Activated CD4-positive, alpha-beta memory T cell treated with anti-CD3 and anti-CD28 coated beads for 36 hours (primary cell): ENCODE measurements at regions of chr1 and their contacts with region 1.

Region 1: GRCh38 chr1:241847796-241848685 is at the start of gene EXO1:
- DNase-seq: peak; percentile 93
- H3K4me3 Mint-ChIP-seq: peak within 1 kb of the TSS; percentile 91
- H3K27ac Mint-ChIP-seq: peak within 1 kb of the TSS; percentile 99
- H3K4me1 Mint-ChIP-seq: peaks cover 22% of the 10 kb centered on the region
- H3K27me3 Mint-ChIP-seq: no peaks in the 10 kb centered on the region
- total RNA-seq, gene EXO1: 44.3 to 50.0 TPM

Region 2: DNA sequence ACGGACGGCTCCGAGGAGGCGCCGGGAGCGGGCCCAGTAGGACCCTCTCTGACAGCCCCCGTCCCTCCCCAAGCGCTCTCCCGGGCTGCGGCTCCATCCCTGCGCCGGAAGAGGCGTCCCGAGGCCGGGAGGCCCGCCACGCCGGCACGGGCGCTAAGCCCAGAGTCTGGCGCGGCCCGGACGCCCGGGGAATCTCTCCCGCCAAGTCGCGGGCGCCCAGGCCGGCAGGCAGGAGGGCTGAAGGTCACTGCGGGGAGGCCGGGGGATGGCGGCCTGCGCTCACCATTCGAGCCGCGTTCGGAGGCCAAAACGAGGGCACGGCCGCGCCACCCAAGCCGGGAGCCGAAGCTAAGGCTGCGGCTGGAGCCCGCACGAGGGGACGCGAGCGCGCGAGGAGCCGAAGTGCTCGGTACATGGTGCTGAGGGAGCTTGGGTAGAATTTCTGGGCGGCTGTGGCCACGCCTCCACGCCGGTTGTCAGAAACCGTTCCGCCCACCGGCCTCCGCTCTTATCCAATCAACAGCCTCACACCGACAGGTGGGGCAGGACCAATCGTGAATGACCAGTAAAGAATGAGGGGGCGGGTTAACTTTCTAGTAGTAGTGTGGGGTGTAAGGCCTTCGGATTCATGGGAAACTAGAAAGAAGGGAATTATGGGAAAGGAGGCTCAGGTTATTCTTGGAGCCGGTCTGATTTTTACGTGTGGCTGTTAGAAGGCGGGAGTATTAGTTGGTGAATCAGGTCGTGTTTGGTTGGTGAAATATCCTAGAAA is 328.5 kb before region 1 on chr1 and contains the start of gene FH:
- CTCF ChIA-PET with region 1: no interaction called
- POLR2A ChIA-PET with region 1: interaction called, 4 read pairs
- intact Hi-C with region 1: loop called (anchors 1 kb)
- DNase-seq: peak; percentile 96
- H3K4me3 Mint-ChIP-seq: peak within 1 kb of the TSS; percentile 87
- H3K27ac Mint-ChIP-seq: peak within 1 kb of the TSS; percentile 53
- H3K4me1 Mint-ChIP-seq: peaks cover 23% of the 10 kb centered on the region
- H3K27me3 Mint-ChIP-seq: peaks cover 21% of the 10 kb centered on the region
- total RNA-seq, gene FH: 85.7 to 89.1 TPM

Region 3: GRCh38 chr1:241640029-241640818 is 207.8 kb before region 1 on chr1 and contains the starts of genes CHML and OPN3:
- CTCF ChIA-PET with region 1: no interaction called
- POLR2A ChIA-PET with region 1: no interaction called
- intact Hi-C with region 1: loop called (anchors 1 kb)
- DNase-seq: peak; percentile 95
- H3K4me3 Mint-ChIP-seq: peak within 1 kb of the TSS; percentile 85
- H3K27ac Mint-ChIP-seq: peak within 1 kb of the TSS; percentile 68
- H3K4me1 Mint-ChIP-seq: peaks cover 44% of the 10 kb centered on the region
- H3K27me3 Mint-ChIP-seq: no peaks in the 10 kb centered on the region
- total RNA-seq, gene CHML: 12.5 to 13.8 TPM
- total RNA-seq, gene OPN3: 8.0 to 9.0 TPM

Region 4: DNA sequence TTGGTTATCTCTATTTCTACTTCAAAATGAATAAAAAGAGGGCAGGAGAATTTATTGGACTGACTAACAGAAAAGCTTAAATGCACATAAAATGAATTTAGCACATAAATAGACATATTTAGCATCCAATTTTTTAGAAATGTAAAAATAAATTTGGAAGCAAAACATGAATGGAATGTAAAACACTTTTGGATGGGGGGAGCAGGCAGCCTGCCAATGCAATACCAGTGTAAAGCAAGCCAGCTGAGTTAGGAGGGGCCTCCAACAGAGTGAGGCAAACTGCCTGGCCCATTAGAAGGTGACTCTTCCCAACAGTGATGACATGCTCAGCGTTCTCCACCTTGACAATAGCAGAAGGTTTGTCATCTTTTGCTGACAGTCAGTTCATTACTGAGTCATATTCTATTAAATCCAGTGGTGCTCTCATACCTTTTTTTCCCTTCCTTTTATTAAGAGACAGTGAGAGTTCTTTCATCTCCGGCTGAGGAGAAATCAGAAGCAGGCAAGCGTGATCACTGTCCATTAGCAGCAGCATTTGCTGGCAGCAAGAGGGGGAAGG is 19.5 kb before region 1 on chr1:
- CTCF ChIA-PET with region 1: no interaction called
- POLR2A ChIA-PET with region 1: no interaction called
- intact Hi-C with region 1: no loop called
- DNase-seq: no peak
- H3K4me3 Mint-ChIP-seq: no peak overlapping the region
- H3K27ac Mint-ChIP-seq: no peak overlapping the region
- H3K4me1 Mint-ChIP-seq: no peaks in the 10 kb centered on the region
- H3K27me3 Mint-ChIP-seq: peaks cover 11% of the 10 kb centered on the region

Region 5: GRCh38 chr1:241950390-241950789 is 102.3 kb after region 1 on chr1:
- CTCF ChIA-PET with region 1: no interaction called
- POLR2A ChIA-PET with region 1: no interaction called
- intact Hi-C with region 1: no loop called
- DNase-seq: no peak
- H3K4me3 Mint-ChIP-seq: no peak overlapping the region
- H3K27ac Mint-ChIP-seq: no peak overlapping the region
- H3K4me1 Mint-ChIP-seq: no peaks in the 10 kb centered on the region
- H3K27me3 Mint-ChIP-seq: peaks cover 6% of the 10 kb centered on the region

Region 6: GRCh38 chr1:241998412-241998921 is 150.4 kb after region 1 on chr1:
- CTCF ChIA-PET with region 1: interaction called, 11 read pairs
- POLR2A ChIA-PET with region 1: no interaction called
- intact Hi-C with region 1: loop called (anchors 5 kb)
- DNase-seq: peak; percentile 67
- H3K4me3 Mint-ChIP-seq: peak overlapping the region; percentile 57
- H3K27ac Mint-ChIP-seq: no peak overlapping the region
- H3K4me1 Mint-ChIP-seq: peaks cover 5% of the 10 kb centered on the region
- H3K27me3 Mint-ChIP-seq: peaks cover 2% of the 10 kb centered on the region

Region 7: GRCh38 chr1:243255791-243256512 is 1407.9 kb after region 1 on chr1 and contains the start of gene SDCCAG8:
- CTCF ChIA-PET with region 1: no interaction called
- POLR2A ChIA-PET with region 1: no interaction called
- intact Hi-C with region 1: loop called (anchors 1 kb)
- DNase-seq: peak; percentile 97
- H3K4me3 Mint-ChIP-seq: peak within 1 kb of the TSS; percentile 95
- H3K27ac Mint-ChIP-seq: peak within 1 kb of the TSS; percentile 100
- H3K4me1 Mint-ChIP-seq: peaks cover 40% of the 10 kb centered on the region
- H3K27me3 Mint-ChIP-seq: peaks cover 3% of the 10 kb centered on the region
- total RNA-seq, gene SDCCAG8: 20.7 to 23.2 TPM